H1 (cell line): ENCODE measurements at regions of chr1 and their contacts with region 1.

Region 1: GRCh38 chr1:17531682-17532487 is 7.6 kb upstream of the ARHGEF10L start:
- DNase-seq: no peak
- H3K4me3 ChIP-seq: no peak overlapping the region
- H3K27ac ChIP-seq: no peak overlapping the region
- H3K4me1 ChIP-seq: peaks cover 0 to 16% (median 10%) of the 10 kb centered on the region in 4 experiments; a peak in 5 of 7 replicates
- H3K27me3 ChIP-seq: no peaks in the 10 kb centered on the region
- CTCF ChIP-seq: no peak
- EP300 ChIP-seq: no peak
- POLR2A ChIP-seq: no peak
- RAD21 ChIP-seq: no peak

Region 2: DNA sequence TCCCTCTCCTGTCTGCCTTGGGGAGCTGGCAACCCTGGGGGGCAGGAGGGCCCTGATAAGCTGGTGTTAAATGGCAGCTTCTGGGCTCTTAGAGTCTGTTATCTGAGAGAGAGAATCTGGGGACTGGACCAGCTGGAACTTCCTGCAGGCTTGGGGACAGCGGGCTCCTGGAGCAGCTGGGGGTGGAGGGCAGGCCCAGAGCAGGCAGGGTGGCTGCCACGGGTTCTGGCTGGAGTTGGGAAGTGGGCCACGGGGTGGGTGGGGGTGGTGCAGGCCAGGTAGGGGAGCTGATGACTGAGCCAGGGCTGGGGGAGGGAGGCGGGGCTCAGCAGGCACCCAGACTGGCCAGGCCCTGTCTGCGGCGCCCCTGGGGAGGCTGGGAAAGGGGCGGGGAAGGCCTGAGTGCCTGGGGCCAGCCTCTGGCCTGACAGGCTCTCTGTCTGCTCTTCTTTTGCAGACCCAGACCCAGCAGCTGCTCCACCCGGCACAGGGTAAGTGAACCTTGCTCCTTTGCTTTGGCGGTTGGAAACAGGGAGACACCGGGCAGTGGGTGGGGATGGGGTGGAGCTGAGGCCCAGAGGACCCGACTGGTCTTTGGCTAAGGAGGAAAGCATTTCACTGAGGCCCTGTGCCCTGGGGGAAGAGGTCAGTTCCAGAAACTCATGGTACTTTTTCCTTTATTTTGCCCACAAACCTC is 56.3 kb after region 1 on chr1:
- CTCF ChIA-PET with region 1: interaction called, 1,640 read pairs
- POLR2A ChIA-PET with region 1: no interaction called
- DNase-seq: no peak
- H3K4me3 ChIP-seq: peak overlapping the region in 1 of 4 experiments; percentile 34; a peak in 2 of 8 replicates
- H3K27ac ChIP-seq: peak overlapping the region; percentile 64
- H3K4me1 ChIP-seq: peaks cover 10 to 35% (median 24%) of the 10 kb centered on the region in 4 experiments
- H3K27me3 ChIP-seq: no peaks in the 10 kb centered on the region; a peak in 1 of 7 replicates
- CTCF ChIP-seq: no peak
- EP300 ChIP-seq: no peak
- POLR2A ChIP-seq: no peak
- RAD21 ChIP-seq: no peak

Region 3: GRCh38 chr1:17768651-17769241 is 236.9 kb after region 1 on chr1:
- CTCF ChIA-PET with region 1: no interaction called
- POLR2A ChIA-PET with region 1: no interaction called
- DNase-seq: no peak
- H3K4me3 ChIP-seq: no peak overlapping the region
- H3K27ac ChIP-seq: no peak overlapping the region
- H3K4me1 ChIP-seq: no peaks in the 10 kb centered on the region; a peak in 2 of 7 replicates
- H3K27me3 ChIP-seq: no peaks in the 10 kb centered on the region
- CTCF ChIP-seq: no peak
- EP300 ChIP-seq: no peak
- POLR2A ChIP-seq: no peak
- RAD21 ChIP-seq: no peak